ENCODE measurements at regions of chr4 and their contacts with region 1.

Region 1: DNA sequence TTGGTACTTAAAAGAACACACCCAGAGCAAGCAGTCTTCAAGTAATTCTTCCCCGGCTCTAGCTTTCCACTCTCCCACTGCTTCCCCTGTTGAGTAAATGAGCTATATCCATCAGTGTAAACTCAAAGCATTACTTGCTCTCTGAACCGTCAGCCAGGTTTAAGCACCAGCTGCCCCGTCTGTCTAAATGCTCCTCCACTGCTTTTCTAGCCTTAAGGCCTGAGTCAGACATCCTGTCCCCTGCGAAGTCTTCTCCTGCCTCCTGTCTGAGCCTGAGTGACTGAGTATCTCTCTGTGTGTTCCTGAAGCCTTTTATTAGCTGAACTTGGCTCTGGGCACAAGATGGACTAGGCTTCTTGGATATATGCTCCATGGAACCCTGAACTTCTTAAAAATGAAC is 205.1 kb downstream of the STK32B start:
- DNase-seq: no peak
- H3K4me3 ChIP-seq: no peak overlapping the region
- H3K27ac ChIP-seq: no peak overlapping the region
- H3K4me1 ChIP-seq: no peaks in the 10 kb centered on the region
- H3K27me3 ChIP-seq: no peaks in the 10 kb centered on the region
- CTCF ChIP-seq: no peak
- POLR2A ChIP-seq: no peak

Region 2: DNA sequence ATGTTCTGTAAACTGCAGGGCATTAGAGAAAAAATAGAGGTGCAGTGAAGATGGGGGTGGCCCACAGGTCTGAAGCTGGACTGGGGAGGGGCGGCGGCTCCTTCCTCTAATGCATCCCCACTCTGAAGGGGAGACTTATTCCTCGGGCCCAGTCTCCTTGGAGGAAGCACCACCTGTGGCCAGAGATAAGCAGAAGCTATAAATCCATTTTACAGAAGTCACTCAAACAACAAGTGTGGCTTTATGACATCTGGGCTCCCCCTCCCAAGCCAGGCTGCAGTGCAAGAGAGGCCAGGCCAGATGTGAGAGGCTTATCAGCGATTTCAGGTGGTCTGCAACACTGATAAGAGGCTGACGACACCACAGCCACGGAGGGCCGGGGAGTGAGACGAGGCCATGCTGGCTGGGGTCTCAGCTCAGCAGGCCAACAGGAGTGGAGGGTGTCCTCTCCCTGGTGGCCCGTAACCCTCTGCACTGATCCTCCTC is 253.0 kb before region 1 on chr4:
- intact Hi-C with region 1: loop called (anchors 5 kb)
- DNase-seq: no peak
- H3K4me3 ChIP-seq: no peak overlapping the region
- H3K27ac ChIP-seq: no peak overlapping the region
- H3K4me1 ChIP-seq: no peaks in the 10 kb centered on the region
- H3K27me3 ChIP-seq: peaks cover 0 to 12% of the 10 kb centered on the region in 2 donors
- CTCF ChIP-seq: no peak
- POLR2A ChIP-seq: no peak

Region 3: DNA sequence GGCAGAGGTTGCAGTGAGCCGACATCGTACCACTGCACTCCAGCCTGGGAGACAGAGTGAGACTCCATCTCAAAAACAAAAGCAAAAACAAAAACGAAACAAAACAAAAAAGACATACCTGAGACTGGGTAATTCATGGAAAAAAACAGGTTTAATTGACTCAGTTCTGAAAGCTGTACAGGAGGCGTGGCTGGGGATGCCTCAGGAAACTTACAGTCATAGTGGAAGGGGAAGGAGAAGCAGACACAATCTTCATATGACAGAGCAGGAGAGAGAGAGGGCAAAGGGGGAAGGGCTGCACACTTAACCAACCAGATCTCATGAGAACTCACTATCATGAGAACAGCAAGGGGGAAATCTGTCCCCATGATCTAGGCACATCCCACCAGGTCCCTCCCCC is 24.4 kb after region 1 on chr4:
- intact Hi-C with region 1: no loop called
- DNase-seq: no peak
- H3K4me3 ChIP-seq: no peak overlapping the region
- H3K27ac ChIP-seq: no peak overlapping the region
- H3K4me1 ChIP-seq: no peaks in the 10 kb centered on the region
- H3K27me3 ChIP-seq: no peaks in the 10 kb centered on the region
- CTCF ChIP-seq: no peak
- POLR2A ChIP-seq: no peak

Region 4: DNA sequence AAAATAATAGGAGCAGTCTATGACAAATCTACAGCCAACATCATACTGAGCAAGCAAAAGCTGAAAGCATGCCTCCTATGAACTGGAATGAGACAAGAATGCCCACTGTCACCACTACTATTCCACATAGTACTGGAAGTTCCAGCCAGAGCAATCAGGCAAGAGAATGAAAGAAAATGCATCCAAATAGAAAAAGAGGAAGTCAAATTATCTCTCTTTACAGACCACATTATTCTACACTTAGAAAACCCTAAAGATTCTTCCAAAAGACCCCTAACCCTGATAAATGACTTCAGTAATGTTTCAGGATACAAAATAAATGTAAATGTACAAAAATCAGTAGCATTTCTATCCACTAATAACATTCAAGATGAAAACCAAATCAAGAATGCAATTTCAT is 43.9 kb after region 1 on chr4:
- intact Hi-C with region 1: no loop called
- DNase-seq: no peak
- H3K4me3 ChIP-seq: no peak overlapping the region
- H3K27ac ChIP-seq: no peak overlapping the region
- H3K4me1 ChIP-seq: no peaks in the 10 kb centered on the region
- H3K27me3 ChIP-seq: no peaks in the 10 kb centered on the region
- CTCF ChIP-seq: no peak
- POLR2A ChIP-seq: no peak

Measured in breast epithelium (tissue), 4 donors.